ENCODE measurements at regions of chr7 and their contacts with region 1.

Region 1: GRCh38 chr7:116588641-116589594 is 64.1 kb downstream of the CAV1 start:
- DNase-seq: no peak

Region 2: GRCh38 chr7:116173051-116174028 is 415.6 kb before region 1 on chr7:
- intact Hi-C with region 1: loop called in 1 of 2 experiments (anchors 10 kb)
- DNase-seq: no peak

Region 3: GRCh38 chr7:116180302-116180701 is 408.6 kb before region 1 on chr7:
- intact Hi-C with region 1: loop called (anchors 5 to 10 kb)
- DNase-seq: no peak

Region 4: GRCh38 chr7:116258734-116259133 is 330.2 kb before region 1 on chr7:
- intact Hi-C with region 1: loop called (anchors 5 kb)
- DNase-seq: no peak

Region 5: DNA sequence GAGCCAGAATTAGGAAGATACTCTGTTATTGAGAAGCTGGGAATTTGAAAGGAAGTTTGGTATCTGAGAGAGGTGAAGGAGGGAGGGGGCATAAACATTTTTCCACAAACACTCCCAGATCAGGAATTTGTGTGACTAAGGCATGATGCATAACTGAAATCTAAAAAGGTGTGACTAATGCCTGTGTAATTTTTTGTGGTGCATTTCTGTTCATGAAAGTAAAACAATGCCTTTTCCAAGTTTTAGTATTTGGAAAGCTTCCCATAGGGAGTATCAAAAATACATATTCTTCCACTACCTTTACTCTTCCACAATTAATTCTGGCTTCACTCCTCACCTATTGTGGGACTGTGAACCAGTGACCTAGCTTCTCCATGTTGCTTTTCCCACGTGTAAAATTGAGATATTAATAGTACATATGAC is 145.8 kb before region 1 on chr7:
- intact Hi-C with region 1: loop called in 1 of 2 experiments (anchors 10 kb)
- DNase-seq: no peak

Region 6: GRCh38 chr7:116525913-116526861 is 62.7 kb before region 1 on chr7:
- intact Hi-C with region 1: loop called in 1 of 2 experiments (anchors 10 kb)
- DNase-seq: peak; percentile 94

Region 7: GRCh38 chr7:116552602-116553001 is 36.3 kb before region 1 on chr7:
- intact Hi-C with region 1: no loop called
- DNase-seq: no peak

Region 8: DNA sequence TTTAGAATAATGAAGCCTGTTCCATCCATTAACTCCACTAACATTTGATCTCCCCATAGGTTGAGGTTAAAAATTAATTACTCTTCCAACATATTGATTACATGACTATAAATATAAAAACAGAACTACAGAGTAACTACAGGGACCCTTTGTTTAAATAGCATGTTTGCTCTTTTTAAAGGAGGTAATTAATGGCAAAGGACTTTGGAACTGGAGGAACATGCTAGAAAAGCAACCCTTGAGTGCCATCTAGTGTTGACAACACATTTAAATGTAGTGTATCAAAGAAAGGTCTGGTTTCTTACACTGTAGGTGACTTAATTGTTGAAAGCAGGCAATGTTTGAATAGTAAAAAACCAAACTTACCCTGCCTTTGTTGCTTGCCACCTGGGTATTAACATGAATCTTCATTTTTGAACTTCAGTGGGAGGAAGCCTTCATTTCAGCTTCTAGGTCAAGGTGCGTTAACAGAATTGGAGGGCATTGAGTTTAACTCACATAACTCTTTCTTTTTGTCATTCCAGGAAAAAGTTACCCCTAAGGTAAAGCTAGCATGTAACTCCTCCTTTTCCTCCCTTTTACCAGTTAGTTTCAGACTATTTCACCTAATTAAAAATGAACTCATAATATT is 220.8 kb after region 1 on chr7:
- intact Hi-C with region 1: loop called (anchors 5 to 10 kb)
- DNase-seq: no peak